Endothelial cell of umbilical vein (primary cell): ENCODE measurements at regions of chr6 and their contacts with region 1.

Region 1: DNA sequence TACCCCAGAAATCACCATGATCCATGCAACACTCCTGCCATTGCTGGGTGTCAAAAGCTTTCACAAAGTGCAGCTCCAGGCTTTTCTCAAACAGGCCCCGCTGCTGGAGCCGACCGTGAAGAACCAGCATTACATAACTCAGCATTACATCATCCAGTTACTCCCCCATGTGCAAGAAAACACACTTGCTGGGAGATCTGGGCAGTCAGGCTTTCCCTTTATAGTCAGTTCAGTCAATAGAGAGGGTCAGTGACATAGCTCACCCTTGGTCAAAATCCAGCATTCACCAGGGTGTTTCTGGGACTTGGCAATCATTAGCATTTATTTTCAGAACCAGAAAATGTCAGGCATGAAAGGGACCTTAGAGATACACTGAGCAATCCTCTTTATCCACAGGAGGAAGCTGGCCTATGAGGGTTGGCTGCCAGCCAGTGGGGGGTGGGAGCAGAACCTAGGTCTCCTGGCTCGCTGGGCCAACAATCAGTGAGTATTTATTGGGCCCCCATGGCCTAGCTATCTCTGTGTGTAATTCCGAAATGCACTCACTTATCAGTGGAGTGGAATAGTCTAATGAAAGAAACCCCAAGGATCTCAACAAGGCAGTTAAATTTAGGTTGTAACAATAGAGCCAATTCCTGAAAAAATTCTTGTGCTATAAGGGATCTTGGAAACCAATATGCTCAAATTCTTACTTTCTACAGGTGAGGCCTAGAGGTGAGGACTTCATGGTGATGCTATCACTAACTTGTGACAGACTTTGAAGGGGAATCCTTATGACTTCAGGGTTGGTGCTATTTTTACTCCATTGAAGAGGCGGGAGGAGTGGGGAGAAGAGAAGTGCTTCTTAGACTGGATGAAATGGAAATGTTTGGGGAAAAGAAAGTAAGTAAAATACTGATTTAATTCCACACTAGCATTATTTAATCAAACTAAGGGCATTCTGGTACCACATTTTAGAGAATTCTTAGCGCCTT is 54.6 kb downstream of the LYRM4 start:
- DNase-seq: peak; percentile 74
- H3K4me3 ChIP-seq: no peak overlapping the region
- H3K27ac ChIP-seq: peak overlapping the region; percentile 32
- H3K4me1 ChIP-seq: peaks cover 27% of the 10 kb centered on the region
- H3K27me3 ChIP-seq: no peaks in the 10 kb centered on the region
- CTCF ChIP-seq: no peak
- POLR2A ChIP-seq: no peak

Region 2: GRCh38 chr6:4624726-4625125 is 581.4 kb before region 1 on chr6:
- CTCF ChIA-PET with region 1: no interaction called
- POLR2A ChIA-PET with region 1: no interaction called
- dilution Hi-C with region 1: no loop called
- intact Hi-C with region 1: no loop called
- DNase-seq: no peak
- H3K4me3 ChIP-seq: no peak overlapping the region
- H3K27ac ChIP-seq: no peak overlapping the region
- H3K4me1 ChIP-seq: no peaks in the 10 kb centered on the region
- H3K27me3 ChIP-seq: no peaks in the 10 kb centered on the region
- CTCF ChIP-seq: no peak
- POLR2A ChIP-seq: no peak

Region 3: DNA sequence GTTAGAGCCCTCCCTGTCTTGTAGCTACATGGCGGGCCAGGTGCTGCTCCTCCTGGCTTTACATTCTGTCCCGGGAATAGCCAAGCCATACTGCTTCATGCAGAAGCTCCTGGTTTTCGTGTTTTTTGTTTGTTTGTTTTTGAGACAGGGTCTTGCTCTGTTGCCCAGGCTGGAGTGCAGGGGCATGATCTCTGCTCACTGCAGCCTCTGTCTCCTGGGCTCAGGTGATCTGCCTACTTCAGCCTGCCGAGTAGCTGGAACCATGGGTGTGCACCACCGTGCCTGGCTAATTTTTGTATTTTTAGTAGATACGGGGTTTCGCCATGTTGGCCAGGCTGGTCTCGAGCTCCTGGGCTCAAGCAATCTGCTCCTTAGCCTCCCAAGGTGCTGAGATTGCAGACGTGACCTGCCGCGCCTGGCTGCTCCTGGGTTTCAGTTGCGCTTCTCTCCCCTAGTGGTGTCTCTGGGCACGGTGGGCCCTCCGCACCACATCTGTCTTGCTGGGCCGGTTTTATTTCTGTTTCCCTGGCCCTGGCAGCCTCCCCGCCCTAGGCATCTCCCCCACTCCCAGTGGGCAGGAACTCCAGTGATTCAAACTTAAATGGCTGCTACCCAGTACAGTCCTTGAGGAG is 417.1 kb before region 1 on chr6:
- CTCF ChIA-PET with region 1: no interaction called
- POLR2A ChIA-PET with region 1: no interaction called
- dilution Hi-C with region 1: no loop called
- intact Hi-C with region 1: no loop called
- DNase-seq: no peak
- H3K4me3 ChIP-seq: no peak overlapping the region
- H3K27ac ChIP-seq: no peak overlapping the region
- H3K4me1 ChIP-seq: no peaks in the 10 kb centered on the region
- H3K27me3 ChIP-seq: no peaks in the 10 kb centered on the region
- CTCF ChIP-seq: no peak
- POLR2A ChIP-seq: no peak

Region 4: DNA sequence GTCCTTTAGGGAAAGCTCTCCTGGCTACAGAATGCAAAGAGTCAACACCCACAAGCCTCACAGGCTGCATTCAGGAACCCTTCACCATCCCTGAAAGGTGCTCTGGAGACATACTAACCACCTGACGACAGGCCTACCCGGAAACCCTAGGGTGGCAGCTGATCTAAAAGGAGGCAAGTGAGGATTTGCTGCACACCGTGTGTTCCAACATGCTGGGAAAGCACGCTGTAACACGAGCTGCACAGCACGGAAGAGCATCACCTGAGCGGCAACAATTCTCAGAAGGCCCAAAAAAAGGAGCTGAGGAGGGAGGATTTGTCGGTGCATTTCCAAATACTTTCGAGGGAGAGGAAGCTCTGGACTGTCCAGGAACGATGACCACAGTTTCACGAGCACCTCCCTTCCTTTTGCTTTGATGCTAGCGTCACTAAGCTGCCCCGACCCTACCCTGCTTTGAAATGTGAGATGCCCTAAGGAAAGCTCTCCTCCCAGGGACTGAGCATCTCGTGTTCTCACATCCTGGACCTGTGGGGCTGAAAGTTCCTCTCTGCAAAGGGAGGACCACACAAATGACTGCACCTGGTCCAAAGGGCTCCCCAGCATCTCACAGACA is 34.0 kb before region 1 on chr6:
- CTCF ChIA-PET with region 1: interaction called, 3 read pairs
- POLR2A ChIA-PET with region 1: no interaction called
- dilution Hi-C with region 1: no loop called
- intact Hi-C with region 1: loop called (anchors 1 kb)
- DNase-seq: no peak
- H3K4me3 ChIP-seq: no peak overlapping the region
- H3K27ac ChIP-seq: no peak overlapping the region
- H3K4me1 ChIP-seq: no peaks in the 10 kb centered on the region
- H3K27me3 ChIP-seq: no peaks in the 10 kb centered on the region
- CTCF ChIP-seq: no peak
- POLR2A ChIP-seq: no peak

Region 5: DNA sequence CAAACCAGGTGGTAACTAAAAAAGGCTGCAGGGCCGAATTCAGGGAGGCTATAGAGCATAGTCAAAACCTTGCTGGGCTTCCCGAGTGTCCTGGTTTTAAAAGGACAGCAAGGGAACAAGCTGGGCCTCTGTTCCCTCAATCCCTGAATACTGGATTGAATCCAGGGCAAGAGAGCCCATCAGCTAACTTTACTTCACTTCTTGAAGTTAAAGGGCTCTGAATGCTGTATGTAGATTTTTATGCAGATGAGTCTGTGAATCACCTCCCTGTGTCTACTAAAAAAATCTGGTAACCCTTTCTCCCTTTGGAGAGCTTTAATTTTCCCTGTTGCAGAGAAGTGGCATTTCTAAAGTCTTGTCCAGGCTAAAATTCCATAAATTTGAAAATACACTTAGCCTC is 25.1 kb after region 1 on chr6:
- CTCF ChIA-PET with region 1: interaction called, 3 read pairs
- POLR2A ChIA-PET with region 1: no interaction called
- dilution Hi-C with region 1: no loop called
- intact Hi-C with region 1: loop called (anchors 2 kb)
- DNase-seq: no peak
- H3K4me3 ChIP-seq: no peak overlapping the region
- H3K27ac ChIP-seq: peak overlapping the region; percentile 47
- H3K4me1 ChIP-seq: peaks cover 17% of the 10 kb centered on the region
- H3K27me3 ChIP-seq: no peaks in the 10 kb centered on the region
- CTCF ChIP-seq: no peak
- POLR2A ChIP-seq: no peak

Region 6: GRCh38 chr6:5246141-5247097 is 40.3 kb after region 1 on chr6:
- CTCF ChIA-PET with region 1: no interaction called
- POLR2A ChIA-PET with region 1: no interaction called
- dilution Hi-C with region 1: no loop called
- intact Hi-C with region 1: no loop called
- DNase-seq: no peak
- H3K4me3 ChIP-seq: no peak overlapping the region
- H3K27ac ChIP-seq: no peak overlapping the region
- H3K4me1 ChIP-seq: no peaks in the 10 kb centered on the region
- H3K27me3 ChIP-seq: no peaks in the 10 kb centered on the region
- CTCF ChIP-seq: no peak
- POLR2A ChIP-seq: no peak